ENCODE measurements at regions of chr2 and their contacts with region 1.

Region 1: GRCh38 chr2:68203587-68203986 is 45.9 kb downstream of the PNO1 start:
- DNase-seq: no peak
- H3K4me3 Mint-ChIP-seq: peak overlapping the region; percentile 67
- H3K27ac Mint-ChIP-seq: peak overlapping the region; percentile 90
- H3K4me1 Mint-ChIP-seq: peaks cover 67% of the 10 kb centered on the region
- H3K27me3 Mint-ChIP-seq: no peaks in the 10 kb centered on the region

Region 2: DNA sequence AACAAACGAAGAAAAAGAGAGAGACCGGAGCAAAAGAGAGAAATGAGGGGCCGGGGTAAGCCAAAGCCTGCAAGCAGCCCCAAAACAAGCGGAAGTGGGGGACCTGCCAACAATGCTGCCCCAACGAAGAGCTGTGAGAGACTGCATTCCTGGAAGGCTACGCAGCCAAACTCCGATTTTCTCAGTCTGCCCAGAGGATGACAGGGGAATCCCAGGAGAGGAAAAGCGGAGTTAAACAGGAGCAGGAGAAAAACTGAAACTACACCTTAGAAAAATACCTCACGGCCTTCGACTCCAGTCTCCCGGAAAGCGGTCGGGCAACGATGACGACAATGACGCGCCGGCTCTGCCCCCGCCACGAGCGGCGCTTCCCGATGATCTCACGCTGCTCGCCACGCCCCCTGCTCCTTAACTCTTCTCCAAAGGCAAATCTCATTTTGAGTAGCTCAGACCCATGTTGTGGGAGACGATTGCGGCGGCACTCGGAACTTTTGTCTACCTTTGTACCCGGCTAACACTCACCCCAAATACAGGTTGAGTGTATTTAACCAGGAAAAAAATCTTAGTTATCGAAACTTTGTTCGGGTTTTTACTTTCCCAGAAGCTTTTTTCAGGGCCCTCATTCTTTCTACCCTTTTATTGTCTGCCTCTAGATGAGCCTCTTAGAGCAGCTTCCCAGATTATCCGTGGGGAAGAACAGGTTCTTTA is 140.8 kb before region 1 on chr2 and contains the start of gene C1D:
- intact Hi-C with region 1: loop called (anchors 1 kb)
- DNase-seq: peak; percentile 90
- H3K4me3 Mint-ChIP-seq: peak within 1 kb of the TSS; percentile 93
- H3K27ac Mint-ChIP-seq: peak within 1 kb of the TSS; percentile 96
- H3K4me1 Mint-ChIP-seq: peaks cover 35% of the 10 kb centered on the region
- H3K27me3 Mint-ChIP-seq: peaks cover 10% of the 10 kb centered on the region
- total RNA-seq, gene C1D: 28.3 and 31.0 TPM in 2 replicates

Region 3: GRCh38 chr2:68190991-68191731 is 12.4 kb before region 1 on chr2:
- intact Hi-C with region 1: loop called (anchors 2 kb)
- DNase-seq: no peak
- H3K4me3 Mint-ChIP-seq: no peak overlapping the region
- H3K27ac Mint-ChIP-seq: peak overlapping the region; percentile 64
- H3K4me1 Mint-ChIP-seq: peaks cover 58% of the 10 kb centered on the region
- H3K27me3 Mint-ChIP-seq: no peaks in the 10 kb centered on the region

Region 4: GRCh38 chr2:68362069-68362468 is 158.5 kb after region 1 on chr2:
- intact Hi-C with region 1: loop called (anchors 10 kb)
- DNase-seq: peak; percentile 65
- H3K4me3 Mint-ChIP-seq: peak overlapping the region; percentile 32
- H3K27ac Mint-ChIP-seq: peak overlapping the region; percentile 36
- H3K4me1 Mint-ChIP-seq: peaks cover 26% of the 10 kb centered on the region
- H3K27me3 Mint-ChIP-seq: peaks cover 12% of the 10 kb centered on the region

Region 5: GRCh38 chr2:68487773-68488355 is 284.3 kb after region 1 on chr2:
- intact Hi-C with region 1: no loop called
- DNase-seq: no peak
- H3K4me3 Mint-ChIP-seq: no peak overlapping the region
- H3K27ac Mint-ChIP-seq: no peak overlapping the region
- H3K4me1 Mint-ChIP-seq: peaks cover 6% of the 10 kb centered on the region
- H3K27me3 Mint-ChIP-seq: peaks cover 4% of the 10 kb centered on the region

Region 6: GRCh38 chr2:68519236-68519635 is 315.6 kb after region 1 on chr2:
- intact Hi-C with region 1: loop called (anchors 5 kb)
- DNase-seq: no peak
- H3K4me3 Mint-ChIP-seq: no peak overlapping the region
- H3K27ac Mint-ChIP-seq: no peak overlapping the region
- H3K4me1 Mint-ChIP-seq: peaks cover 24% of the 10 kb centered on the region
- H3K27me3 Mint-ChIP-seq: no peaks in the 10 kb centered on the region

Region 7: GRCh38 chr2:68612765-68613519 is 409.4 kb after region 1 on chr2:
- intact Hi-C with region 1: no loop called
- DNase-seq: no peak
- H3K4me3 Mint-ChIP-seq: no peak overlapping the region
- H3K27ac Mint-ChIP-seq: no peak overlapping the region
- H3K4me1 Mint-ChIP-seq: no peaks in the 10 kb centered on the region
- H3K27me3 Mint-ChIP-seq: peaks cover 2% of the 10 kb centered on the region

Measured in activated T-helper 1 cell treated with anti-CD3 and anti-CD28 coated beads, Interleukin-12 subunit alpha, Interleukin-12 subunit beta, Interleukin-2, Interleukin-4 antibody, amounts not matched to agents 30 ng/mL and 10 ng/mL and 1 ng/mL, durations not matched to agents 14 hours and 24 hours and 36 hours (primary cell).